Activated T-helper 1 cell treated with anti-CD3 and anti-CD28 coated beads, Interleukin-12 subunit alpha, Interleukin-12 subunit beta, Interleukin-2, Interleukin-4 antibody, amounts not matched to agents 30 ng/mL and 10 ng/mL and 1 ng/mL, durations not matched to agents 14 hours and 24 hours and 36 hours (primary cell): ENCODE measurements at regions of chr12 and their contacts with region 1.

Region 1: DNA sequence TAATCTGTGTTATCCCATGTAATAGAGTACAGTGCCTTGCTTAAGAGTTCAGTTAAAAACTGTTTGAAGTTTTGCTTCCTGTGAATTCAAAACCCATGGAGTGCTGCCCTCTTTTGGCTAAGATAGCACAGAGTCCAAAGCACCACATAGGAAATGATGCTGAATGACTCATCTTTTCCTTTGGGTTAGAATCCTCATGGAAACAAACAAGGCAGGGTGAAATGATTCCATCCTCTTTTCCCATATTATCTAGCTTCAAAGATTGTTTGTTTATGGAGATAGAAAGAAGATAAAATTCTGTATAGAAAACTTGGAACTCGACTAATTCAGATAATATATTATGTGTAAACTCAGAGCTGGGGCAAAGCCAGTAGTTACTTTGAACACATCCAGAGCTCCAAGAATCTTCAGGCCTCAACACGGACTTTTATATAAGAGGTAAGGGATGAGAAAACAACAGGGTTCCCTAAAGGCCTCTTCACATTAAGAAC is 87.4 kb downstream of the OTOGL start:
- DNase-seq: peak; percentile 18
- H3K4me3 Mint-ChIP-seq: no peak overlapping the region
- H3K27ac Mint-ChIP-seq: no peak overlapping the region
- H3K4me1 Mint-ChIP-seq: no peaks in the 10 kb centered on the region
- H3K27me3 Mint-ChIP-seq: peaks cover 2% of the 10 kb centered on the region

Region 2: GRCh38 chr12:79547735-79548609 is 638.8 kb before region 1 on chr12:
- intact Hi-C with region 1: loop called (anchors 2 kb)
- DNase-seq: no peak
- H3K4me3 Mint-ChIP-seq: no peak overlapping the region
- H3K27ac Mint-ChIP-seq: no peak overlapping the region
- H3K4me1 Mint-ChIP-seq: no peaks in the 10 kb centered on the region
- H3K27me3 Mint-ChIP-seq: no peaks in the 10 kb centered on the region

Region 3: DNA sequence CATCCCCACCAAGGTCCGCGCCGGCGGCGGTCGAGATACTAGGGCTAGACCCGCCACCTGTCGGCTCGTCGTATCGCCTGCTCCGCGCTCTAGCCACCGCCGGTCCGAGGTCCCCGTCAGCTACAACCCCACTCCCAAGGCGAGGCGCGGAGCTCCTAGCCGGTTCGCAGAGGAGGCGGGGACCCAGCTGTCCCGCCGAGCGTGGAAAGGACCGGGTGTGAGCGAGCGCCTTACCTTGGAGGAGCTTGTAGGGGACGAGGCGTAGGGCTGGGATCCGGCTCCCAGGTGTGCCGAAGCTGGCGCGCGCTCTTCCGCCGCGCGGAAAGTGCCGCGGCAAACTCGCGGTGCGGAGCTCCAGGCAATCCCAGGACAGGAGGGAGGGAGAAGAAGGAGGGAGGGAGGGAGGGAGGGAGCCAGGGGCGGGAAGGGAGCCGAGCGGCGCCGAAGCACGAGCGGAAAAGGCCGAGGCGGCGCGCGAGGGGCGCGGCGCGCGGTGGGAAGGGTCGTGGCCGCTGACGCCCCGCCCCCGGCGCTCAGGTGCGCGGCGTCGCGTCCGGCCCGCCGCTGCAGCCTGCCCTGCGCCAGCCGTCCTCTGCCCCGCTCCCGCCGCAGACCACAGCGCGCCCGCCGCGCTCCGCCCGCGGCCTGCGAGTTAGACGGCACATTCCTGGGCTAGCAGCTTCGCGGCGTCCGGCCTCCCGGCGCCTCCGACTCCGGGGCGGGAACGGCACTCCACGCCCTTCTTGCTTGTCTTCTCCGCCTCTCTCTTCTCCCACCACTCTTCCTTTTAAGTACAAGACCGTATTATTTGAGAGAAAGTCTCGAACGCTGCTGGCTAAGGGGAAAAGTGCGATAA is 495.9 kb before region 1 on chr12 and contains the start of gene PAWR:
- intact Hi-C with region 1: loop called (anchors 10 kb)
- DNase-seq: peak; percentile 1
- H3K4me3 Mint-ChIP-seq: peak within 1 kb of the TSS; percentile 85
- H3K27ac Mint-ChIP-seq: no peak within 1 kb of the TSS
- H3K4me1 Mint-ChIP-seq: peaks cover 10% of the 10 kb centered on the region
- H3K27me3 Mint-ChIP-seq: peaks cover 55% of the 10 kb centered on the region
- total RNA-seq, gene PAWR: 4.0 and 6.1 TPM in 2 replicates

Region 4: DNA sequence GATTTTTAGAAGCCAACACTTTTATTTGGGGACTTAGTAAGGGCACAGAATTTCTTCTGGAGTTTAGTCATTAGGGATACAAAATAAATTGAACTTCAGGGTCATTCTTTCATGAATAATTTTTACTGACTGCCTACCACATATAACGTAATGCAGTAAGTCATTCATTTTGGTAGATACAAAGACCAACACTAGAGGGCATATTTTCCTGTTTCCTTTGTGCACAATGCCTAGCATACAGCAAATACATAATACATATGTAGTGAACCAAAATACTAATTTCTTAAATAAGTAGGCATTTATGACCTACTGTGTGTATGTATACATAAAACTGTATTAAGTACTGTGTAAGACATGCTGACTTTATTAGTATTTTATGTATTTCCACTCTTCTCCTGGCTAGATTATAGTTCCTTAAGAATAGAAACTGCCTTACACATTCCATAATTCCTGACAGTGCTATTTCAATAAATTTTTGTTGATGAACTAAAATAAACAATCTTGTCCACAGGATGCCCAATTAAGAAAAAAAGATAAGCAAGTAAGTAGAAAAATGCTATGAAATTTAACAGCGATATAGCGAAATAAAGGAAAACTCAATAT is 299.8 kb before region 1 on chr12:
- intact Hi-C with region 1: loop called (anchors 1 kb)
- DNase-seq: no peak
- H3K4me3 Mint-ChIP-seq: no peak overlapping the region
- H3K27ac Mint-ChIP-seq: no peak overlapping the region
- H3K4me1 Mint-ChIP-seq: peaks cover 45% of the 10 kb centered on the region
- H3K27me3 Mint-ChIP-seq: no peaks in the 10 kb centered on the region

Region 5: DNA sequence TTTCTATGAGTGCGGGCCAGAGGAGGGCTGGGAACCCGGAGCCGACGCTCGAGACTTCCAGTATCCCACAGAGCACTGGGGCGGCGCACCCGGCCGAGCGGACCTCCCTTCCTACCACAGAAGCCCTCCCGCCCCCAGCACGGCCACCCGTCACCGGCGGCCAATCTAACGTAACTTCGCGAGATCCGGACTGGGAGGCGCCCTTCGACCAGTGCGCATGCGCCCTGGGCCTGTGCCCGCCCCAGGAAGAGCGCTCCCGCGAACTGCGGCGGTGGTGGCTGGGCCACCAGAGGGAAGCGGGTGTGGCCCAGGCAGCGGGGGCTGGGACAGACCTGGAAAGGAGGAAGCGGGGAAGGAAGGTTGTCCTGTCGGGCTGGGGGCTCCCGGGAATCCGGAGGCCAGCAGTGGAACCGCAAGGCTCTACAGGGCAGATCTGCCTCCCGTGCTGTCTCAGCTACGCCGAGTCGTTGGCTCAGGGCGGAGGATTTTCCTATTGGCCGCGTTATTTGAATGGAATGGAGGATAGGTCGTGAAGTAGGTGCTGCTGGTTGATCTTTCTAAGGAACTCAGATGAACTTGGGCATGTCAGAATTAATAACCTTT is 251.7 kb before region 1 on chr12 and contains the start of gene PPP1R12A:
- intact Hi-C with region 1: loop called (anchors 1 kb)
- DNase-seq: peak; percentile 94
- H3K4me3 Mint-ChIP-seq: peak within 1 kb of the TSS; percentile 96
- H3K27ac Mint-ChIP-seq: peak within 1 kb of the TSS; percentile 88
- H3K4me1 Mint-ChIP-seq: peaks cover 44% of the 10 kb centered on the region
- H3K27me3 Mint-ChIP-seq: no peaks in the 10 kb centered on the region
- total RNA-seq, gene PPP1R12A: 85.0 and 87.1 TPM in 2 replicates

Region 6: GRCh38 chr12:80087486-80088213 is 99.1 kb before region 1 on chr12:
- intact Hi-C with region 1: loop called (anchors 10 kb)
- DNase-seq: no peak
- H3K4me3 Mint-ChIP-seq: no peak overlapping the region
- H3K27ac Mint-ChIP-seq: no peak overlapping the region
- H3K4me1 Mint-ChIP-seq: peaks cover 12% of the 10 kb centered on the region
- H3K27me3 Mint-ChIP-seq: peaks cover 2% of the 10 kb centered on the region

Region 7: GRCh38 chr12:80269803-80270552 is 83.2 kb after region 1 on chr12:
- intact Hi-C with region 1: loop called (anchors 5 kb)
- DNase-seq: no peak
- H3K4me3 Mint-ChIP-seq: no peak overlapping the region
- H3K27ac Mint-ChIP-seq: no peak overlapping the region
- H3K4me1 Mint-ChIP-seq: no peaks in the 10 kb centered on the region
- H3K27me3 Mint-ChIP-seq: no peaks in the 10 kb centered on the region